HCT116 (cell line): ENCODE measurements at regions of chr4 and their contacts with region 1.

Region 1: GRCh38 chr4:112321776-112322684 is 24.9 kb downstream of the ALPK1 start:
- DNase-seq: peak; percentile 33
- ATAC-seq: peak; percentile 83
- H3K4me3 ChIP-seq: no peak overlapping the region
- H3K27ac ChIP-seq: no peak overlapping the region
- H3K4me1 ChIP-seq: no peaks in the 10 kb centered on the region
- H3K27me3 ChIP-seq: no peaks in the 10 kb centered on the region
- CTCF ChIP-seq: peak; percentile 67 to 93 (median 84); a peak in 5 of 6 replicates
- POLR2A ChIP-seq: no peak
- RAD21 ChIP-seq: peak; percentile 60

Region 2: GRCh38 chr4:112311516-112311915 is 10.5 kb before region 1 on chr4:
- CTCF ChIA-PET with region 1: interaction called, 11 read pairs
- POLR2A ChIA-PET with region 1: no interaction called
- RAD21 ChIA-PET with region 1: no interaction called
- intact Hi-C with region 1: no loop called
- DNase-seq: no peak
- ATAC-seq: no peak
- H3K4me3 ChIP-seq: no peak overlapping the region
- H3K27ac ChIP-seq: no peak overlapping the region
- H3K4me1 ChIP-seq: no peaks in the 10 kb centered on the region; a peak in 1 of 4 replicates
- H3K27me3 ChIP-seq: no peaks in the 10 kb centered on the region
- CTCF ChIP-seq: no peak
- POLR2A ChIP-seq: no peak
- RAD21 ChIP-seq: no peak